Ascending aorta (tissue), 2 donors: ENCODE measurements at regions of chr16 and their contacts with region 1.

Region 1: GRCh38 chr16:83717814-83718213 is 90.0 kb upstream of the HSBP1 start:
- DNase-seq: no peak
- H3K4me3 ChIP-seq: no peak overlapping the region
- H3K27ac ChIP-seq: no peak overlapping the region
- H3K4me1 ChIP-seq: peaks cover 0 to 14% of the 10 kb centered on the region in 2 donors
- H3K27me3 ChIP-seq: no peaks in the 10 kb centered on the region
- CTCF ChIP-seq: no peak

Region 2: DNA sequence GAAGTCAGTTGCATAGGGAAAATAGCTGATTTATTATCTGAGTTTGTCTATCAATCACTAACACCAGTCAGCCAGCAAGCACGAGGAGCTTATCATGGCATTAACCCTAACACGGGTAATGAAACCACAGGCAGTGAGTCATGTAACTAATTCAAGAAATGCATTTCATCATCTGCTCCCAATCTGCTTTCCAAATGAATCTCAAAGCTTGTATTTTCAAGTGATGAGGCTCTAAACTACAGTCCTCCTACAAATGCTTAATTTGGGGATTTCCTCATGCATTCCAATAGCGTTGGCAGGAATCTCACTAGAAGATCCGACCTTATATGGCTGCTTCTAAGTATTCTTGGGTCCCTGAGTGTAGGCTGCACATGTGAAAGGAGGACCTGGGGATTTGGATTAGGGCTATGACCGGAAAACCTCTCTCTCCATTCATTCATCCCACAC is 28.4 kb before region 1 on chr16:
- intact Hi-C with region 1: loop called (anchors 2 kb)
- DNase-seq: peak in 1 of 2 donors; percentile 75
- H3K4me3 ChIP-seq: no peak overlapping the region
- H3K27ac ChIP-seq: peak overlapping the region; percentile 48 to 81
- H3K4me1 ChIP-seq: peaks cover 0 to 40% of the 10 kb centered on the region in 2 donors
- H3K27me3 ChIP-seq: no peaks in the 10 kb centered on the region
- CTCF ChIP-seq: no peak

Region 3: DNA sequence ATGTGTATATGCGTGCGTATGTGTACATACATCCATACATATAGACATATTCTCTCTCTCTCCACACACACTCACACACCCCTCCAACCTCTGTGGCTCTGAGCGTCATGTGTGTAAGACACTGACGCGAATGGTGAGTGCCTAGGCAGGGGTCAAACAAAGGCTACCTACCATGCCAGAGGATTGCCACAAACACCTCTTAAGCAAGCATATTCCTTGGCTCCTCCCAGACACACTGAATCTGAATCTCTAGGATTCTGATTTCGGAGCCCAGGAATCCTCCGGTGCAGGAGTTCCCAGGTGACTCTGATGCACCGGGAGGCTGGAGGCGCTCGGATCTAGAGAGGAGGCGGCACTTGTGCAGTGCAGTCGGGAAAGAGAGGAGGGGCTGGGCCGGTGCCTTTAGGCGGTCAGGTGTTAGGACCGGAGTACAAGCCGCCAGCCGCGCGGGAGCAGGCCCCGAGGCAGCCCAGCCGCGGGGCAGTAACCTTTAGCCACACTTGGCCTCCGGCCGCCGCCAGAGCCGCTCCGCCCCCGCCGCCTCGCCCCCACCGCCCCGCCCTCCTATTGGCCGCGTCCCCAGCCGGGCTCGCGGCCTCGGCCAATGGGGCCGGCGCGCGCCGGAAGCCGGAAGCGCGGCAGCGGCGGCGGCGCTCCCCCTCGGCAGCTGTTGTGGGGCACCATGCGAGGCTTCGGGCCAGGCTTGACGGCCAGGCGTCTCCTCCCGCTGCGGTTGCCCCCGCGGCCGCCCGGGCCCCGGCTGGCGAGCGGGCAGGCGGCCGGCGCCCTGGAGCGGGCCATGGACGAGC is 180.9 kb after region 1 on chr16 and contains the start of gene MLYCD:
- intact Hi-C with region 1: loop called (anchors 10 kb)
- DNase-seq: peak; percentile 50 to 90
- H3K4me3 ChIP-seq: peak within 1 kb of the TSS; percentile 95 to 97
- H3K27ac ChIP-seq: peak within 1 kb of the TSS; percentile 94 to 98
- H3K4me1 ChIP-seq: peaks cover 3 to 13% of the 10 kb centered on the region in 2 donors
- H3K27me3 ChIP-seq: no peaks in the 10 kb centered on the region
- CTCF ChIP-seq: peak in 1 of 3 experiments; percentile 4
- total RNA-seq, gene MLYCD: 13.4 TPM

Region 4: GRCh38 chr16:84449171-84450140 is 731.6 kb after region 1 on chr16:
- intact Hi-C with region 1: no loop called
- DNase-seq: no peak
- H3K4me3 ChIP-seq: no peak overlapping the region
- H3K27ac ChIP-seq: no peak overlapping the region
- H3K4me1 ChIP-seq: no peaks in the 10 kb centered on the region
- H3K27me3 ChIP-seq: no peaks in the 10 kb centered on the region
- CTCF ChIP-seq: no peak